Activated naive CD4-positive, alpha-beta T cell treated with anti-CD3 and anti-CD28 coated beads for 36 hours (primary cell): ENCODE measurements at regions of chr13 and their contacts with region 1.

Region 1: GRCh38 chr13:78121459-78122348 is 203.1 kb upstream of the EDNRB start:
- DNase-seq: peak; percentile 55
- H3K4me3 Mint-ChIP-seq: no peak overlapping the region
- H3K27ac Mint-ChIP-seq: no peak overlapping the region
- H3K4me1 Mint-ChIP-seq: peaks cover 4% of the 10 kb centered on the region
- H3K27me3 Mint-ChIP-seq: peaks cover 14% of the 10 kb centered on the region

Region 2: GRCh38 chr13:77595166-77595810 is 526.4 kb before region 1 on chr13:
- CTCF ChIA-PET with region 1: interaction called, 3 read pairs
- intact Hi-C with region 1: loop called (anchors 2 kb)
- DNase-seq: no peak
- H3K4me3 Mint-ChIP-seq: no peak overlapping the region
- H3K27ac Mint-ChIP-seq: no peak overlapping the region
- H3K4me1 Mint-ChIP-seq: no peaks in the 10 kb centered on the region
- H3K27me3 Mint-ChIP-seq: peaks cover 8% of the 10 kb centered on the region

Region 3: GRCh38 chr13:77779552-77780272 is 342.0 kb before region 1 on chr13:
- CTCF ChIA-PET with region 1: interaction called, 24 read pairs
- intact Hi-C with region 1: loop called (anchors 1 kb)
- DNase-seq: peak; percentile 61
- H3K4me3 Mint-ChIP-seq: no peak overlapping the region
- H3K27ac Mint-ChIP-seq: peak overlapping the region; percentile 57
- H3K4me1 Mint-ChIP-seq: peaks cover 12% of the 10 kb centered on the region
- H3K27me3 Mint-ChIP-seq: peaks cover 10% of the 10 kb centered on the region

Region 4: DNA sequence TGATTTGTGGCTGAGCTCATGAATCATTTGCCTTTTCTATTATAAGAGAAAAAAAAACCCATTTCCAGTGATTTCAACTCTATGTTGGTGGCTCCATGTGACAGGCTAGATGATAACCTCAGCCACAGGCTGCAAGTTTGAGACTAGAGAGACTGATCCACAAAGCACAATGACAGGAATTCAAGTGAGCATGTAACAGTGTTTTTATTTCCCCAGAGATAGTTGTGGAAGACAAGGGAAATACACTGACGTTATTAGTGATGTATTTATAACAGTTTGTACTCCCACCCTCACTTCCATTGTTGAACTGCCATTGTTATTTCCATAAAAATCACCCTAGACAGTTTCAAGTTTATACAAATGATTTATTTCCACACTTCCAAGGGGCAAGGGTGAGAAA is 175.2 kb before region 1 on chr13:
- CTCF ChIA-PET with region 1: no interaction called
- intact Hi-C with region 1: no loop called
- DNase-seq: no peak
- H3K4me3 Mint-ChIP-seq: no peak overlapping the region
- H3K27ac Mint-ChIP-seq: no peak overlapping the region
- H3K4me1 Mint-ChIP-seq: no peaks in the 10 kb centered on the region
- H3K27me3 Mint-ChIP-seq: peaks cover 5% of the 10 kb centered on the region

Region 5: DNA sequence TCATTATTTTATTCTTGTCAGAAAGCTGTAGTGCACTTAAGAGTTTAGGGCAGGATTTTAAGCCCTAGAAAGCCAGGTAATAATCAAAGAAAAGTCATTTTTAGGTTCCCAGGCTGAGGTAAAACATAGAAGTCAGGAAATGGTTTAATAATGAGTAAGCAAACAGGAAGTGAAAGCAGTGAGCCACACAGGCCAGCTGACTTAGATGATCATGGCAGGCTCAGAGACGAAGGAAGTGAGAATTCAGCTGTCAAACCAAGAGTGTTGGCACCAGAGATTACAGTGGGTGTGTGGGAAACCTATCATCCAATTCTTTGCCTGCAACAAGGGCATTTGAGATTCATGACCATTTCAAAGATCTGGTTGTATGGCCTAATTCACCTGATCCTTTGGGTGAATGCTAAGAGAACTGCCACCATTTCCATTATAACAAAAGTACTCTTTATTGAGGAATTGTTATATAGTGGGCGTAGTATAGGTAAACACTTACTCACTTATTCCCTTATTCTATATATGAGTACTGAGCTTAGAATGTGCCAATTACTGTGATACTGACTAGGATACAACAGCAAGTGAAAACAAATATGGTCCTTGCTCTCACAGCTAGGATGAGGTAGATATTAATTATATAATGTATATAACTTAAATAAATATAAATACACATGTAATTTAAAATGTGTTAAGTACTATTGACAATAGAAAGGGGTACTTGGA is 99.4 kb before region 1 on chr13:
- CTCF ChIA-PET with region 1: no interaction called
- intact Hi-C with region 1: loop called (anchors 1 kb)
- DNase-seq: peak; percentile 73
- H3K4me3 Mint-ChIP-seq: no peak overlapping the region
- H3K27ac Mint-ChIP-seq: no peak overlapping the region
- H3K4me1 Mint-ChIP-seq: peaks cover 6% of the 10 kb centered on the region
- H3K27me3 Mint-ChIP-seq: peaks cover 2% of the 10 kb centered on the region